ENCODE measurements at regions of chr12 and their contacts with region 1.

Region 1: DNA sequence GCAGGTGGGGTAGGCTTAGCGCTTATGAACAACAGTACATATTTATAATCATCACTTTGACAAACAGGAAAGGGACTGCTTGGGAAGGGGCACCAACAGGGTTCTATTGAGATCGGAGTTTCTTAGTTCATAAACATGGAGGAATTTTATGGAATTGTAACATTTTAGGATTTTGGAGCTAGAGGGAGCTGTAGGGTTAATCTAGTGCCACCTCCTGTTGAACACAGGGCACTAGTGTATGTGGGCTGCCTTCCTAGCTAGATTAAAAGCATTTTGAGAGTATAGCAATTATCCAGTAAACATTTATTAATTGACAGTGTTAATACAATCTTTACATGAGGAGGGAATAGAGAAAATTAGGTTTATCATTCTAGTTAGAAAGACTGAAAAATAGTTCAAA is 23.1 kb upstream of the TBC1D30 start:
- DNase-seq: no peak
- ATAC-seq: peak; percentile 74
- H3K4me3 ChIP-seq: no peak overlapping the region
- H3K27ac ChIP-seq: no peak overlapping the region
- H3K4me1 ChIP-seq: peaks cover 14% of the 10 kb centered on the region
- H3K27me3 ChIP-seq: no peaks in the 10 kb centered on the region
- CTCF ChIP-seq: no peak
- EP300 ChIP-seq: no peak
- POLR2A ChIP-seq: no peak
- RAD21 ChIP-seq: no peak

Region 2: GRCh38 chr12:65121049-65121955 is 319.9 kb after region 1 on chr12 and contains the start of gene WIF1:
- CTCF ChIA-PET with region 1: interaction called, 8 read pairs
- POLR2A ChIA-PET with region 1: no interaction called
- in situ Hi-C with region 1: loop called (anchors 5 kb)
- intact Hi-C with region 1: loop called (anchors 1 kb)
- DNase-seq: no peak
- ATAC-seq: no peak
- H3K4me3 ChIP-seq: no peak within 1 kb of the TSS
- H3K27ac ChIP-seq: no peak within 1 kb of the TSS
- H3K4me1 ChIP-seq: no peaks in the 10 kb centered on the region
- H3K27me3 ChIP-seq: no peaks in the 10 kb centered on the region
- CTCF ChIP-seq: no peak
- EP300 ChIP-seq: no peak
- POLR2A ChIP-seq: no peak
- RAD21 ChIP-seq: no peak
- total RNA-seq, gene WIF1: not detected in 2 replicates

Measured in HepG2 (cell line).